ENCODE measurements at regions of chr9 and their contacts with region 1.

Region 1: GRCh38 chr9:126490871-126491567 is 122.7 kb upstream of the LMX1B start:
- DNase-seq: no peak
- ATAC-seq: peak; percentile 69

Region 2: GRCh38 chr9:125176636-125177035 is 1314.4 kb before region 1 on chr9:
- intact Hi-C with region 1: loop called (anchors 5 kb)
- DNase-seq: no peak
- ATAC-seq: peak; percentile 90

Region 3: DNA sequence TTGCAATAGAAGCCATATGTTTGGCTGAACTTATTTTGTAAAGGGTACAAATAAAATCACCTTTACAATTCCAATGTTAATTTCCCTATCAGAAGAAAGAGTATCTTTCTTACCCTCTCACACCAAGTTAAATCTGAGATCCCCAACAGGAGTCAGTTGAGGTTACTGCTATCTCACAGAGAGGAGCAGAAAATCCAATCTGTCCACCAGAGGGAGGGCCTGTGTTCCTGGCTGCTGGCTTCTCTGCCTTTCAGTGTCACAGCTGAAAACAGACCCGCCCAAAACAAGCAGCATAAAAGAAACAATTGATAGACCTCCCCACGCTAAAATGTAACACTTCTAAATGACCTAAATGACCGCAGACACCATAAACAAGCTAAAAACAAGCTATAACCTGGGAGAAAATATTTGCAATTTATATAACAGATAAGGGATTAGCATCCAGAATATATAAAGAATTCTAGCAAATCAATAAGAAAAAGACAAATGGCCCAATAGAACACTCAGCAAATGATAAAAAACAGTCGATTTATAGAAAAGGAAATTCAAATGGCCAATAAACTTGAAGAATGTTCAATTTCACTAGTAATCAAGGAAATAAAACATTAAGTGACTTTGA is 188.9 kb before region 1 on chr9:
- intact Hi-C with region 1: loop called (anchors 10 kb)
- DNase-seq: no peak
- ATAC-seq: peak; percentile 77

Region 4: DNA sequence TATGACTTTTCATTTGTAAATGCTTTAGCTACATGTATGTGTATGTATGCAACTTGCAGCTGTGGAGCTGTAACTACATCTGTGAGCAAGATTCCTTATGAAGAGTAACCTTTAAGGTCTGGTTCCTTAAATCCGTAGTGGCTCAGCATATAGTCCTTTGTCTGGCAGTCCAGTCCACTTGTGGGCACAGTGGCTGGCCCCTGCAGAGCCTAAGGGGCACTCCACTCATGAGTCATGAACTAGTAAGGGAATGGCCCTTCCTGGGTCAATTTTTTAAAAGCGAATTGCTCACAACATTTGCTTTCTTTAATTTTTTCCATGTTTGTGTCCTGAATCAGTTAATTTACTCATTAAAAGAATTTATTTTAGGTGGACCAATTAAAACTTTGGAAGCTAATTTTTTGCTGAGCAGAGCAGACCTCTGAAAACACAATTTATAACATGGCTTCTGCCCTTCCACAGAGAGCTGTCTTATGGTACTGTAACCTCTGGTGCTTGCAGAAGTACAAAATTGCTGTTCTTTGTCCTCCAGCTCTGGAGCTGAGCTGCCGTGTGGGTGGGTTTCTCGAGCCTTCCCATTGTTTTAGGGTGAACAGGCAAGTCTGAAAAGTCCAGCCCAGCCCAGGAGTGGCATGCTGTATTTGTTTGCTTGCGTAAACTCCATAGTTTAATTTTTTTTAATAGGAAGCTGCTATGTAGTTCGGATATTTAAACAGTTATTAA is 54.3 kb before region 1 on chr9:
- intact Hi-C with region 1: no loop called
- DNase-seq: peak; percentile 12
- ATAC-seq: peak; percentile 68

Measured in sciatic nerve (tissue), 2 donors.